Activated CD8-positive, alpha-beta T cell treated with anti-CD3 and anti-CD28 coated beads, Interleukin-2, amount 10 ng/mL, durations not matched to agents 7 days and 5 days (primary cell): ENCODE measurements at regions of chr9 and their contacts with region 1.

Region 1: DNA sequence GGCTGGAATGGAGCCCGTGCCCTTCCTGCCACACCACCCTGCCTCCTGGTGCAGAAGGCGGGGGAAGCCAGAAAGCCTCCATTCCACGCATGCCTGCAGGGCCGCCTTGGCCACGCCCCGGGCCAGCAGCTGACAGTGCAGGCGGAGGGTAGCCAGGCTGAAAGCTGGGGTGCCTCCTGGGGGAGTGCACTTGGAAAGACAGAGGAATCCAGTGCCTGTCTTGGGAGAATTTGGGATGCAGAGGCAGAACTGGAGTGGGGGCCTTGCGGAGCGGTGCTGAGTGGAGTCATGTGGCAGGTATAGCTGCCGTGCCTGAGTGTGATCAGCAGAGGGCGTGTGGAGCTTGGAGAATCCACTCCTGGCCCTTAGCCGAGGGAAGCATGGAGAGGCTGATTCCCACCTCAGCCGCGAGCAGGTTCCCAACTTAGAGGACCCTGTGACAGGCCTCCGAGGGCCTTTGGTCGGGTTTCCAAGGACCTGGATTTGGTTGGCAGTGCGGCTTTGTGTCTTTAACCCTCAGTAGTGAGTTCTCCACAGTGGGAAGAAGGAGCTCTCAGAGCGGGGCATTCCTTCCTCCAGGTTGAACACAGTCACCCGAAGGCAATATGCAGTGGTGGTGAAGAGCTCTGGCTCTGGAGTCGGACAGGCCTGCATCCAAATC is 9.1 kb upstream of the URM1 start:
- DNase-seq: peak; percentile 78
- ATAC-seq: peak; percentile 91
- H3K4me3 Mint-ChIP-seq: peak overlapping the region; percentile 66
- H3K27ac Mint-ChIP-seq: peak overlapping the region; percentile 55
- H3K4me1 Mint-ChIP-seq: peaks cover 28% of the 10 kb centered on the region
- H3K27me3 Mint-ChIP-seq: no peaks in the 10 kb centered on the region

Region 2: DNA sequence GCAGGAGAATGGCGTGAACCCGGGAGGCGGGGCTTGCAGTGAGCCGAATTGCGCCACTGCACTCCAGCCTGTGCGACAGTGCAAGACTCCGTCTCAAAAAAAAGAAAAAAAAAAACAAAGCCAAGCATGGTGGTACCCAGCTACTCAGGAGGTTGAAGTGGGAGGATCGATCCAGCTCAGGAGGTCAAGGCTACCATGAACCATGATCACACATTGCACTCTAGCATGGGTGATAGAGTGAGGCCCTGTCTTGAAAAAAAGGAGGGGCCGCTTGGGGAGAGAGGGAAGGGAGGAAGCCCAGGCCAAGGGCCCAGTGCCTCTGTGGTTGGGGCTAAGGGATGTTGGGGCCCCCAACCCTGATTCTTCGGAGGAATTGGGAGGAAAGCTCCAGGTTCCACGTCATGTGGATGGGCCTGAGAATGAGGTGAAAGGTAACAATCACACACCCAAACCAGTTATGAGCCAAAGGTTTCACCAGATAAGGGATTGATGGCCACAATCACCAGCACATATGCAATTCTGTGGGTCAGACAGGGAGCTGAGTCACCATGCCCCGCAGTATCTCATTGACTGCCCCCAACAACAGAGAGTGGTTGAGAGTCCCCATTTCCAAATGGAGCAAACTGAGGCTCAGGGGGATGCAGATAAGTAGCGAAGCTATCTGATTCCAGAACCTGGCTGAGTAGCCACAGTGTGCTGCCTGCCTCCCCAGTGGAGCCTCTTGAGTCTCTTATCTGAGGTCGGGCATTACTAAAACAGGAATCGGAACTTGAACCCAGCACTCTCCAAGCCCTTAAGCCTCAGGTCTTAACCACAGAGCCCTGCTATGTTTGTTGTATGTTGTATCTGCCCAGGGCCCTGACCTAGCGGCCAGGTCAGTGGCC is 65.5 kb before region 1 on chr9:
- CTCF ChIA-PET with region 1: interaction called, 24 read pairs
- POLR2A ChIA-PET with region 1: no interaction called
- DNase-seq: no peak
- ATAC-seq: no peak
- H3K4me3 Mint-ChIP-seq: no peak overlapping the region
- H3K27ac Mint-ChIP-seq: no peak overlapping the region
- H3K4me1 Mint-ChIP-seq: peaks cover 4% of the 10 kb centered on the region
- H3K27me3 Mint-ChIP-seq: no peaks in the 10 kb centered on the region

Region 3: DNA sequence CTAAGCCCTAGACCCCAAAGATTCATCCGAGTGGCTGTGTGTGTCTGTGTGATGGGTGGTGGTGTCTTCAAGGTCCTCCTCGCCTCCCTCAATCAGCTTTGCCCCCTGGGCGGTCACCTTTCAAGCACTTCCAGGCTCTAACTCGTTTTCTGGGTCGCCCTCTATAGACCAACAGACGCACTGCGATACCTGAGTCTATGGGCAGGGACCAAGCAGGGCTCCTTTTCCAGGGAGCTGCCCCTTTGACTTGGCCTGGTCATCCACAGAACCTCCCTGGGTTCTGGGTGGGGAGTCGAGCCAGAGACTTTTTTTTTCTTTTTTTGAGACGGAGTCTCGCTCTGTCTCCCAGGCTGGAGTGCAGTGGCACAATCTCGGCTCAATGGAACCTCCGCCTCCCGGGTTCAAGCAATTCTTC is 20.7 kb before region 1 on chr9:
- CTCF ChIA-PET with region 1: interaction called, 16 read pairs
- POLR2A ChIA-PET with region 1: no interaction called
- DNase-seq: peak; percentile 87
- ATAC-seq: peak; percentile 70
- H3K4me3 Mint-ChIP-seq: peak overlapping the region; percentile 95
- H3K27ac Mint-ChIP-seq: peak overlapping the region; percentile 92
- H3K4me1 Mint-ChIP-seq: peaks cover 11% of the 10 kb centered on the region
- H3K27me3 Mint-ChIP-seq: no peaks in the 10 kb centered on the region

Region 4: DNA sequence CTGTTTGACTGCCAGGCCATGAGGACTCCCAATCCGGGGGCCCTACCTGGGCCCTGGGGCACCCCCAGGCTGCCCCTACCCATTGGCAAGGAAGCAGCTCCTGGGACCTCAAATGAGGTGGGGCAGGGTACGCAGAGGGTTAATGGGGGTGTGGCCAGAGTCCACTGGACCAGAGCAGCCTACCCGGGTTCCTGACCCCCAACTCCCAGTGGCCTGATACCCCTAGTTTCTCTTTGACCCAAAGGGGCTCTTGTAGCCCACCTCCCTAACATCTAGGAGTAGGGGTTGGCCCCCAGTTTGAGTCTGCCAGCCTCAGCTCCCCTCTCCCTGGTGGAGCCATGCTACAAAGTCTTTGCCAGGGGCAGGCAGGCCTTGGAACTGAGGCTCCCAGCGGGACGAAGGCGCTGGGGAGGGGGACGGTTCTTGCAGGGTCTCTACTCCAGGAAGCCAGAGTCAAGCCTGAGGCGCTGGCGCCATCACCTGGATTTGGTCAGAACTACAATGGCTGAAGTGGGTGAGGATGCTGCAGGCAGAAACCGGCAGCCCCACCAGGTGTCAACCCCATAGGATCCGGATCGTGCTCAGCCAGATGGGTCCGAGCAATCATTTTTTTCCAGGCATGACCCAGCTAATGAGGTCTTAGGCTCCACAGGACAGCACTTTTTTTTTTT is 50.1 kb after region 1 on chr9:
- CTCF ChIA-PET with region 1: interaction called, 62 read pairs
- POLR2A ChIA-PET with region 1: interaction called, 3 read pairs
- DNase-seq: peak; percentile 65
- ATAC-seq: peak; percentile 62
- H3K4me3 Mint-ChIP-seq: no peak overlapping the region
- H3K27ac Mint-ChIP-seq: no peak overlapping the region
- H3K4me1 Mint-ChIP-seq: no peaks in the 10 kb centered on the region
- H3K27me3 Mint-ChIP-seq: peaks cover 52% of the 10 kb centered on the region

Region 5: DNA sequence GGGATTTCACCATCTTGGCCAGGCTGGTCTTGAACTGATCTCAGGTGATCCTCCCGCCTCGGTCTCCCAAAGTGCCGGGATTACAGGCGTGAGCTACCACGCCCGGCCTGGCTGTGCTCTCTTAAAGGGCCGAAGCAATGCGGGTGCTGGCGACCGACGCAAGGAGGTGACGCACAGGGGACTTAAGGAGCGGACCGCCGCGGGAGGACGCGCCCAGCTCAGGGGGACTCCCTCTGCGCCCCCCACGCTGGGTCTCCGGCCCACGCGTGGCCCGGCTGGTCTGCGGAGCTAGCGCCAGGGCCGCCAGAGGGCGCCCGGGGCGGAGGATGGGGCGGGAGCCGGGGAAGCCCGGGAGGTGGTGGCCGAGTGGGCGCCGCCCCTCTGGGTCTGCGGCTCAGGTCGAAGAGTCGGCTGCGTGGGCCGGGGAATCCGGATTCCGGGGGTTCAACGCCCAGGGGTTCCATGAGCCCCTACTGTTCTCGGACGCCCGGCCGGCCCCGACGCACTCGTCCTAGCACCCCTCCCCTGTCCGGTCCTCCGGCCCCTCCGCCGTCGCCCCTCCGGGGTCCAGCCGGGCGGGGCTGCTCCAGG is 58.0 kb after region 1 on chr9:
- CTCF ChIA-PET with region 1: interaction called, 37 read pairs
- POLR2A ChIA-PET with region 1: no interaction called
- DNase-seq: peak; percentile 73
- ATAC-seq: peak; percentile 88
- H3K4me3 Mint-ChIP-seq: peak overlapping the region; percentile 65
- H3K27ac Mint-ChIP-seq: no peak overlapping the region
- H3K4me1 Mint-ChIP-seq: peaks cover 24% of the 10 kb centered on the region
- H3K27me3 Mint-ChIP-seq: peaks cover 27% of the 10 kb centered on the region